Right lobe of liver (tissue), 6 donors: ENCODE measurements at regions of chr12 and their contacts with region 1.

Region 1: GRCh38 chr12:5083955-5084849 is 40.5 kb downstream of the KCNA5 start:
- DNase-seq: no peak
- ATAC-seq: peak; percentile 65 to 78 (median 70)
- H3K4me3 ChIP-seq: no peak overlapping the region
- H3K27ac ChIP-seq: no peak overlapping the region
- H3K4me1 ChIP-seq: no peaks in the 10 kb centered on the region
- H3K27me3 ChIP-seq: no peaks in the 10 kb centered on the region
- CTCF ChIP-seq: peak; percentile 56 to 64 (median 62)
- POLR2A ChIP-seq: no peak

Region 2: DNA sequence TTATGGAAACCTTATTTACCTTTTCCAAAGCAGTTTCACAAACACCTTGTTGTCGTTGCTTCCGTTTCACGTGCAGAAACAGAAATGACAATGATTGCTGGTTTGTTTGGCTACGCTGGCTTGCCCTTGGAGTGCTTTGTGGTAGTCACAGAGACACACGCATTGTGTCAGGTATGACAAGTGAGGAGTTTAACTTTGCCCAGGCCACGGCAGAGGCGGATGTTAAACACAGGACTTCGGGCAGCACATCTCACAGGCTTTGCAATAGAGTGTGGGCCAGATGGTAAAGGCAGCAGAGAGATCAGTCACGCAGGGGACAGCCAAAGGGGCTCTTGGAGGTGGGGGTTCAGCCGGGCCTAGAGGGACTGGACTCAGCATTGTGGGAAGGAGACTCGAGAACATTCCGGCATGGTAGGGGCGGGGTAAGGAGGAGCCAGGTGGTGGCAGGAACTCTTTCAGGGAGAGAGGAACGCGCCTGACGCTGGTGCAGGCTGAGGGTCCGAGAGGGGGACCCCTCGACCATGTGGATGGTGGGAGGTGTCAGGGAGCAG is 234.3 kb before region 1 on chr12:
- intact Hi-C with region 1: loop called (anchors 5 to 10 kb)
- DNase-seq: no peak
- ATAC-seq: no peak
- H3K4me3 ChIP-seq: no peak overlapping the region
- H3K27ac ChIP-seq: no peak overlapping the region
- H3K4me1 ChIP-seq: no peaks in the 10 kb centered on the region
- H3K27me3 ChIP-seq: no peaks in the 10 kb centered on the region
- CTCF ChIP-seq: no peak
- POLR2A ChIP-seq: no peak

Region 3: DNA sequence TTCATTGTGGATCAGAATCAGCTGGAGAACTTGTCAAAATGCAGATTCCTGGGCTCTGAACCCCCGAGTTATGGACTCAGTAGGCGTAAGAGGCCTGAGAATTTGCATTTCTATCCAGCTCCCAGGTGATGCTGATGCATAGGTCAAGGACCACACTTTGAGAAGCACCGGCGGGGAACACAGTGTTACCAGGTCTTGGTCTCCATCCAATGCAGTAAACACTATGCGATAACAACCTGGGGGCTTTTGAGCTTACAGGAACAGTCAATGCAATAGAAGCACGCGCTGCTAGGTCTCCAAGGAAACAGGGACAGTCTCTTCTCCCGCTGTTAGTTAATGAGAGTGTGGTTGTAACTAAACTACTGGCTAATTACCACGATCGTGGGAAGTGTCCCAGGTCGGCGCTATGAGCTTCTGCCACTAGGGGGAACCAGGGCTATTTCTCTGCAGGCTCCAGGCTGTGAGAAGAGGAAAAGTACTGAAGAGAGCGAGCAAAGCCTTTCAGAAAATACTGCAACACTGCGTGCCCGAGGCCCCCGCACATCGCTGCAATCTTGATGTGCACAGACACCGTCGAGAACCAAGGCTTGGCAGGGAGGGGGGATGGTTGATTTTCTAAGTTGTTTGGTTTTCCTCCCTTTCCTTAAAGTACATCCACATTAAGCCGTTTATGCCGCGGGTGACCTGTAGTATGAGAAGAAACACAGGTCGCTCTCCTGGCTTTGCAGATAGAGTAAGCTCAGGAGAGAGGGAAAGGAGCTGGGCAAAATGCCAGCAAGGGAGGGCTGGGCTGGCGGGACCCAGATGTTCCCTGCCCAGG is 226.5 kb before region 1 on chr12:
- intact Hi-C with region 1: loop called (anchors 5 to 10 kb)
- DNase-seq: peak; percentile 65 to 71 (median 69)
- ATAC-seq: peak; percentile 78 to 86 (median 84)
- H3K4me3 ChIP-seq: no peak overlapping the region
- H3K27ac ChIP-seq: no peak overlapping the region
- H3K4me1 ChIP-seq: peaks cover 0 to 13% (median 0%) of the 10 kb centered on the region in 4 donors
- H3K27me3 ChIP-seq: no peaks in the 10 kb centered on the region
- CTCF ChIP-seq: peak; percentile 65 to 90 (median 88)
- POLR2A ChIP-seq: no peak

Region 4: GRCh38 chr12:5022465-5023061 is 61.6 kb before region 1 on chr12:
- intact Hi-C with region 1: loop called (anchors 5 kb)
- DNase-seq: peak in 2 of 3 donors; percentile 35 to 54
- ATAC-seq: peak; percentile 78 to 88 (median 86)
- H3K4me3 ChIP-seq: no peak overlapping the region
- H3K27ac ChIP-seq: no peak overlapping the region
- H3K4me1 ChIP-seq: no peaks in the 10 kb centered on the region
- H3K27me3 ChIP-seq: no peaks in the 10 kb centered on the region
- CTCF ChIP-seq: peak; percentile 69 to 92 (median 86)
- POLR2A ChIP-seq: no peak

Region 5: DNA sequence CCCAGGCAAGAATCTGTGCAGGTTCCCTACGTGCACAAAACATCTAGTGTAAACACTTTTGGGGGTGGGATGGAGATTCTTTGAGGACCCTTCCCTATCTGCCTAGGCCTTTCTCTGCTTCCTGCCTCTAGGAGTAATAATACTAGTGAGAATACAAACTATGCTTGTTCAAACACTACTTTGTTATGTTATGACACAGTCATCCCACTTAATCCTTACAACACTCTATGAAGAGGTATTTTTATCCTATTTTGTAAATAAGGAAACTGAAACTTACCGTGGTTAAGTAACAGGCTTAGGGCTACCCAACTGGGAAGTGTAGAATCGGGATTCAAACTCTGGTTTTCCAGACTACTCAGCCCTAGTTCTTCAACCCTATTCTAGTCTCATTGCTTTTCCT is 56.0 kb after region 1 on chr12:
- intact Hi-C with region 1: no loop called
- DNase-seq: no peak
- ATAC-seq: no peak
- H3K4me3 ChIP-seq: no peak overlapping the region
- H3K27ac ChIP-seq: no peak overlapping the region
- H3K4me1 ChIP-seq: no peaks in the 10 kb centered on the region
- H3K27me3 ChIP-seq: no peaks in the 10 kb centered on the region
- CTCF ChIP-seq: no peak
- POLR2A ChIP-seq: no peak